GM10248 (cell line): ENCODE measurements at regions of chr1 and their contacts with region 1.

Region 1: GRCh38 chr1:179809506-179810366 is 66.6 kb downstream of the FAM163A start:
- DNase-seq: peak; percentile 71
- CTCF ChIP-seq: peak; percentile 91

Region 2: GRCh38 chr1:179541774-179542173 is 268.0 kb before region 1 on chr1:
- CTCF ChIA-PET with region 1: no interaction called
- POLR2A ChIA-PET with region 1: no interaction called
- DNase-seq: no peak
- CTCF ChIP-seq: no peak

Region 3: DNA sequence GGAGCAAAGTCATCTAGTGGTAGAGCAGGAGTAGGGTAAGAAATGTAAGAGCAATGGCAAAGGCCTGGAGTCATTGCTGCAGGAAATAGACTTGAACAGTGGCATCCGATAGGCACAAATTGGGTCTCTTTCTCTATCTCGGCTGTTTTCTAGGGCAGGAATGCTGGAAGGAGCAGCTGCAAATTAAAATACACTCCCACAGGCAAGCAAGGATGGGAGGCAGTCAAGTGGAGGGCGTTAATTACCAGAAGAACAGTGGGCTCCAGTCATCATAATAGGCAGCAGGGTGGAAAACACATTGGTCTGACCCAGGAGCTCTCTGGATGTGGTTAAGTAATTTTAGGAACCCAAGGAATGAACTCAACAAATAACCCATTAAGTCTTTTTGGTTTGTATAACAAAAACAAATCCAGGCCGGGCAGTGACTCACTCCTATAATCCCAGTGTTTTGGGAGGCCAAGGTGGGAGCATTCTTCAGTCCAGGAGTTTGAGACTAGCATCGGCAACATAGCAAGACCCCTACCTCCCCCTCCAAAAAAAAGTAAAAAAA is 225.9 kb before region 1 on chr1:
- CTCF ChIA-PET with region 1: no interaction called
- POLR2A ChIA-PET with region 1: no interaction called
- DNase-seq: no peak
- CTCF ChIP-seq: no peak

Region 4: GRCh38 chr1:179706339-179706941 is 103.3 kb before region 1 on chr1:
- CTCF ChIA-PET with region 1: interaction called, 647 read pairs
- POLR2A ChIA-PET with region 1: interaction called, 5 read pairs
- DNase-seq: peak; percentile 51
- CTCF ChIP-seq: peak; percentile 70

Region 5: GRCh38 chr1:179728271-179728670 is 81.5 kb before region 1 on chr1:
- CTCF ChIA-PET with region 1: interaction called, 21 read pairs
- POLR2A ChIA-PET with region 1: no interaction called
- DNase-seq: no peak
- CTCF ChIP-seq: no peak

Region 6: GRCh38 chr1:179770884-179771502 is 38.7 kb before region 1 on chr1:
- CTCF ChIA-PET with region 1: interaction called, 10 read pairs
- POLR2A ChIA-PET with region 1: no interaction called
- DNase-seq: no peak
- CTCF ChIP-seq: no peak

Region 7: DNA sequence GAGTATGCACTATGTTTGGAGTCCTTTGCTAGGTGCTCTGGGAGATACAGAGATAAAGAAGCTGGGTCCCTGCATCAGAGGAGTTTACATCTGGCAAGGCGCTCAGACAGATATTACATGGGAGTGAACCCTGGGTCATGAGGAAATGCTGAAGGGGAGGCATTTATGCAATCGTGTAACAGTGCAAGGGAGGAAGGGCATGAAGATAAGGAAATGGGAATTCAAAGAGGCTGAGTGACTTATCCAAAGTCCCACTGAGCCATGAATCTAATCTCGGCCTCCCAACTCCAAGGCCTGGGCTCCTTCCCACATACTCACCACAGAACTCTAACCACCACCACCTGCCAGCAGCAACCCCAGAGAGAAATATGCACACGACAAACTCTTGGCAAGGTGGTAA is 15.1 kb before region 1 on chr1:
- CTCF ChIA-PET with region 1: interaction called, 208 read pairs
- POLR2A ChIA-PET with region 1: no interaction called
- DNase-seq: no peak
- CTCF ChIP-seq: no peak

Region 8: GRCh38 chr1:179840107-179840506 is 30.4 kb after region 1 on chr1:
- CTCF ChIA-PET with region 1: interaction called, 22 read pairs
- POLR2A ChIA-PET with region 1: interaction called, 6 read pairs
- DNase-seq: no peak
- CTCF ChIP-seq: no peak